ENCODE measurements at regions of chr16 and their contacts with region 1.

Region 1: GRCh38 chr16:85245307-85246172 is 133.3 kb upstream of the CIBAR2 start:
- DNase-seq: no peak
- ATAC-seq: peak; percentile 49

Region 2: GRCh38 chr16:85114909-85115567 is 130.5 kb before region 1 on chr16:
- intact Hi-C with region 1: loop called (anchors 5 kb)
- DNase-seq: peak; percentile 89
- ATAC-seq: peak; percentile 82

Measured in Right ventricle myocardium inferior (tissue), 1 donor.